ENCODE measurements at regions of chr20 and their contacts with region 1.

Region 1: DNA sequence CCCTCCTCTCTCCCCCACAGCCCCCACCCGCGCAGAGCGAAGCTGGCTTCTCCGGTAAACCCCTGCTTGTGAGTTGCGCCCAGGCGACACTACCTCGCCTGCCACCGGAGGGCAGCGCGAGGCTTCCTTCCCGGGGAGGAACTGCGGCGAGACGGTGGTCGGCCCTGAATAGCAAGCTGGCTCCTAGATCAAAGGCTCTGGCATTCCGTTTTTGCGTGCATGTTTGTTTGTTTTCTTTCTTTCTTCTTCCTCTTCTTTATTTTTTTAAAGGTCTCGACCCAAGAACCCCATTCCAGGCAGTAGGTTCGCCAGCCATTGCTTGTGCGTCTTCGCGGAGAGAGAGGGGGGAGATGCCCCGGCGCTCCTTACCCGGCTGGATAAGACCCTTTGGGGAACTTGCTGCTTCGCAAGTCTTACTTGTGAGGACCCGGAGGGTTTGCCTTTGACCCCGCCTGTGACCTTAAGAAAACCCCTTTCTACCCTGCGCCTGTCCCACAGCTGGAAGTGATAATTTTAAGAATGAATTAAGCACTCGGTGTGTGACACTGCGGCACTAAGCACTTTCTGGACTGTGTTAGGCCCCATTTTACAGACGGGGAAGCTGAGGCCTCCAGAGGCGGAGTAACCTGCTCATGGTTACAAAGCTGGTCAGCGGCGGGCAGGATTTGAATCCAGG is 92.7 kb upstream of the SIRPA start:
- DNase-seq: peak; percentile 89
- ATAC-seq: peak; percentile 67
- H3K4me3 ChIP-seq: peak overlapping the region; percentile 46 to 71 (median 67)
- H3K4me3 Mint-ChIP-seq: peak overlapping the region; percentile 89
- H3K27ac ChIP-seq: peak overlapping the region; percentile 85
- H3K27ac Mint-ChIP-seq: peak overlapping the region; percentile 88
- H3K4me1 ChIP-seq: peaks cover 22 to 28% of the 10 kb centered on the region in 2 donors
- H3K4me1 Mint-ChIP-seq: peaks cover 26% of the 10 kb centered on the region
- H3K27me3 ChIP-seq: no peaks in the 10 kb centered on the region
- H3K27me3 Mint-ChIP-seq: no peaks in the 10 kb centered on the region
- CTCF ChIP-seq: peak; percentile 84

Region 2: GRCh38 chr20:1764136-1765033 is 38.1 kb before region 1 on chr20:
- CTCF ChIA-PET with region 1: interaction called, 8 read pairs
- POLR2A ChIA-PET with region 1: no interaction called
- intact Hi-C with region 1: loop called (anchors 1 kb)
- DNase-seq: peak; percentile 77
- ATAC-seq: peak; percentile 79
- H3K4me3 ChIP-seq: no peak overlapping the region
- H3K4me3 Mint-ChIP-seq: no peak overlapping the region
- H3K27ac ChIP-seq: no peak overlapping the region
- H3K27ac Mint-ChIP-seq: no peak overlapping the region
- H3K4me1 ChIP-seq: no peaks in the 10 kb centered on the region
- H3K4me1 Mint-ChIP-seq: peaks cover 1% of the 10 kb centered on the region
- H3K27me3 ChIP-seq: peaks cover 0 to 3% (median 0%) of the 10 kb centered on the region in 4 experiments
- H3K27me3 Mint-ChIP-seq: peaks cover 13% of the 10 kb centered on the region
- CTCF ChIP-seq: peak; percentile 87

Region 3: DNA sequence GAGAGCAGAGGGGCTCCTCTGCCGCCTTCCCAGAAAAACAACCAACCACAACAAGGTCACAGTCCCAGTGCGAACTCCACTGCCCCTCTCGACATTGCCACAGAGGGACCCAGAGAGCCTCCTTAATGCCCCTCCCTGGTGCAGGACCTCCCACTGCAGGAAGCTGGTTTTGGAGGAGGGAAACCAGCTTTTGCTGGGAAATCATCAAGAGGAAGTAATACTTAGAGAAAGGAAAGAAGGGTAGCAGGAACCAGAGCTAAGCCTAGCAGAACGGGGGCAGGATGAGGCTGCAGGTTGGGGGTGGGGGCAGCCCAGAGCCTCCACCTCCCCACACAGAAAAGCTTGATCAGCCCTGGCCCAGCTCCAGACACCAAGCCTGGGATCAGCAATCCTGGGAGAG is 54.9 kb after region 1 on chr20:
- CTCF ChIA-PET with region 1: interaction called, 37 read pairs
- POLR2A ChIA-PET with region 1: no interaction called
- intact Hi-C with region 1: no loop called
- DNase-seq: no peak
- ATAC-seq: no peak
- H3K4me3 ChIP-seq: no peak overlapping the region
- H3K4me3 Mint-ChIP-seq: no peak overlapping the region
- H3K27ac ChIP-seq: no peak overlapping the region
- H3K27ac Mint-ChIP-seq: no peak overlapping the region
- H3K4me1 ChIP-seq: peaks cover 5 to 19% of the 10 kb centered on the region in 2 donors
- H3K4me1 Mint-ChIP-seq: peaks cover 9% of the 10 kb centered on the region
- H3K27me3 ChIP-seq: peaks cover 0 to 23% (median 2%) of the 10 kb centered on the region in 4 experiments
- H3K27me3 Mint-ChIP-seq: peaks cover 12% of the 10 kb centered on the region
- CTCF ChIP-seq: no peak

Region 4: GRCh38 chr20:1900321-1900801 is 97.8 kb after region 1 on chr20:
- CTCF ChIA-PET with region 1: interaction called, 19 read pairs
- POLR2A ChIA-PET with region 1: interaction called, 3 read pairs
- intact Hi-C with region 1: loop called (anchors 1 kb)
- DNase-seq: peak; percentile 52
- ATAC-seq: peak; percentile 22
- H3K4me3 ChIP-seq: no peak overlapping the region
- H3K4me3 Mint-ChIP-seq: no peak overlapping the region
- H3K27ac ChIP-seq: no peak overlapping the region
- H3K27ac Mint-ChIP-seq: no peak overlapping the region
- H3K4me1 ChIP-seq: peaks cover 33 to 37% of the 10 kb centered on the region in 2 donors
- H3K4me1 Mint-ChIP-seq: peaks cover 45% of the 10 kb centered on the region
- H3K27me3 ChIP-seq: no peaks in the 10 kb centered on the region
- H3K27me3 Mint-ChIP-seq: no peaks in the 10 kb centered on the region
- CTCF ChIP-seq: peak; percentile 37

Region 5: GRCh38 chr20:1965520-1966351 is 163.2 kb after region 1 on chr20:
- CTCF ChIA-PET with region 1: interaction called, 84 read pairs
- POLR2A ChIA-PET with region 1: no interaction called
- intact Hi-C with region 1: loop called (anchors 1 kb)
- DNase-seq: peak; percentile 87
- ATAC-seq: peak; percentile 88
- H3K4me3 ChIP-seq: peak overlapping the region; percentile 9 to 57 (median 42)
- H3K4me3 Mint-ChIP-seq: peak overlapping the region; percentile 50
- H3K27ac ChIP-seq: no peak overlapping the region
- H3K27ac Mint-ChIP-seq: no peak overlapping the region
- H3K4me1 ChIP-seq: peaks cover 16 to 18% of the 10 kb centered on the region in 2 donors
- H3K4me1 Mint-ChIP-seq: peaks cover 18% of the 10 kb centered on the region
- H3K27me3 ChIP-seq: no peaks in the 10 kb centered on the region
- H3K27me3 Mint-ChIP-seq: peaks cover 2% of the 10 kb centered on the region
- CTCF ChIP-seq: peak; percentile 93

Region 6: GRCh38 chr20:2065099-2065498 is 262.6 kb after region 1 on chr20:
- CTCF ChIA-PET with region 1: no interaction called
- POLR2A ChIA-PET with region 1: no interaction called
- intact Hi-C with region 1: no loop called
- DNase-seq: no peak
- ATAC-seq: no peak
- H3K4me3 ChIP-seq: no peak overlapping the region
- H3K4me3 Mint-ChIP-seq: no peak overlapping the region
- H3K27ac ChIP-seq: no peak overlapping the region
- H3K27ac Mint-ChIP-seq: no peak overlapping the region
- H3K4me1 ChIP-seq: no peaks in the 10 kb centered on the region
- H3K4me1 Mint-ChIP-seq: no peaks in the 10 kb centered on the region
- H3K27me3 ChIP-seq: peaks cover 0 to 22% (median 12%) of the 10 kb centered on the region in 4 experiments
- H3K27me3 Mint-ChIP-seq: peaks cover 39% of the 10 kb centered on the region
- CTCF ChIP-seq: no peak

Region 7: GRCh38 chr20:2101865-2102584 is 299.5 kb after region 1 on chr20:
- CTCF ChIA-PET with region 1: interaction called, 5 read pairs
- POLR2A ChIA-PET with region 1: interaction called, 3 read pairs
- intact Hi-C with region 1: loop called (anchors 1 kb)
- DNase-seq: peak; percentile 98
- ATAC-seq: peak; percentile 79
- H3K4me3 ChIP-seq: peak overlapping the region; percentile 71 to 92 (median 83)
- H3K4me3 Mint-ChIP-seq: peak overlapping the region; percentile 96
- H3K27ac ChIP-seq: peak overlapping the region; percentile 100
- H3K27ac Mint-ChIP-seq: peak overlapping the region; percentile 100
- H3K4me1 ChIP-seq: peaks cover 28 to 32% of the 10 kb centered on the region in 2 donors
- H3K4me1 Mint-ChIP-seq: peaks cover 44% of the 10 kb centered on the region
- H3K27me3 ChIP-seq: no peaks in the 10 kb centered on the region
- H3K27me3 Mint-ChIP-seq: no peaks in the 10 kb centered on the region
- CTCF ChIP-seq: no peak